Activated CD4-positive, alpha-beta T cell treated with anti-CD3 and anti-CD28 coated beads for 36 hours (primary cell): ENCODE measurements at regions of chr21 and their contacts with region 1.

Region 1: DNA sequence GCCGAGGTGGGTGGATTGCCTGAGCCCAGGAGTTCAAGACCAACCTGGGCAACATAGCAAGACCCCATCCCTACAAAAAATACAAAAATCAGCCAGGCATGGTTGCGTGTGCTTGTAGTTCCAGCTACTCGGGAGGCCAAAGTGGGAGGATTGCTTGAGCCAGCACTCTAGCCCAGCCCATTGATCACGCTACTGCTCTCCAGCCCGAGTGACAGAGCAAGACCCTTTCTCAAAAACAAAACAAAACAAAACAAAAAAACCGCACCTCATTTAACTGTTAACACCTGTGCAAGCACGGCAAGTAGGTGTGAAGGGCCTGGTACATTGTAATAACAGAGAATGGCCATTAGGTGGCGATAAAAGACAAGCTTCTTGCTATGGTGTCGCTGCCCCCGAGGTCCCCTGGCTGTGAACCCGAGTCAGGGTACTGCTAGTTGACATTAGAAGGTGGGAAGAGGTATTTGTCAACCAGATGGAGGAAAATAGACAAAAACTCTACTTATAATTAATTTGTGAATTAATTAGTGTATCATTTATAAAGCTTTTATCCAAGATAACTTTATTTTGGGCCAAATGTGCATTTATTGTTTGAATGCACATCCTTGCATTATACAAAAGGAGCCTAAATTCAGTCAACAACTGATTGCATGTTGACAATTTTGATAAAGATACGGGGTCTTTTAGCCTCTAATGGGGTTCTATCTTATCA is 66.5 kb downstream of the SH3BGR start:
- DNase-seq: peak; percentile 66
- ATAC-seq: peak; percentile 60
- H3K4me3 Mint-ChIP-seq: no peak overlapping the region
- H3K27ac Mint-ChIP-seq: no peak overlapping the region
- H3K4me1 Mint-ChIP-seq: no peaks in the 10 kb centered on the region
- H3K27me3 Mint-ChIP-seq: no peaks in the 10 kb centered on the region

Region 2: GRCh38 chr21:38755681-38756371 is 762.5 kb before region 1 on chr21:
- CTCF ChIA-PET with region 1: no interaction called
- POLR2A ChIA-PET with region 1: no interaction called
- intact Hi-C with region 1: no loop called
- DNase-seq: peak; percentile 29
- ATAC-seq: peak; percentile 74
- H3K4me3 Mint-ChIP-seq: no peak overlapping the region
- H3K27ac Mint-ChIP-seq: no peak overlapping the region
- H3K4me1 Mint-ChIP-seq: peaks cover 6% of the 10 kb centered on the region
- H3K27me3 Mint-ChIP-seq: no peaks in the 10 kb centered on the region

Region 3: DNA sequence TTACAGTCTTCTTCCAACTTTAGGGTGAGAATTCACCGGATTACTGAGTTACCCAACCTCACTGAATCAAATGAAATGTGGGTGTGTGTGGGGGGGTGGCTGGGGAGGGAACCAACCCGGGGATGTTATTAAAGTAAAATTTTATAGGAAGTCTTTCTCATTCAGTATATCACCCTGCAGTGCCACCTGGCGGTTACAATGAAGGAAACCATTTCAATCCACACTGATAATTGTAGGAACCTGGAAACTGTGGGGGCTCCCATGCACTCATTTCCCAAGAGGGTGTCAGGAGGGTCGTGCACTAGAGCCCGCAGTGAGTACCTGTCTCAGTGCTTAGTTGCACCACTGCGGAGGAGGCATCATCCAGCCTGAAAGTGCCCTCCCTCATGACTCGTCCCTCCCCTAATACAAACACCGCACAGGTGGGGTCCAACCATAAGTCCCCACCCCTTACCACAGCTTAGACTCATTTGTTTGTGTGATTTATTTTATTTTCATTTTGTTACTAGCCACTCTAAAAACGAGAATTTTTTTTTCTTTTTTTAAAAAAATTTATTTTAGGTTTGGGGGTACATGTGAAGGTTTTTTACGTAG is 197.6 kb after region 1 on chr21:
- CTCF ChIA-PET with region 1: interaction called, 33 read pairs
- POLR2A ChIA-PET with region 1: no interaction called
- intact Hi-C with region 1: loop called (anchors 1 kb)
- DNase-seq: peak; percentile 66
- ATAC-seq: no peak
- H3K4me3 Mint-ChIP-seq: no peak overlapping the region
- H3K27ac Mint-ChIP-seq: no peak overlapping the region
- H3K4me1 Mint-ChIP-seq: no peaks in the 10 kb centered on the region
- H3K27me3 Mint-ChIP-seq: peaks cover 11% of the 10 kb centered on the region

Region 4: DNA sequence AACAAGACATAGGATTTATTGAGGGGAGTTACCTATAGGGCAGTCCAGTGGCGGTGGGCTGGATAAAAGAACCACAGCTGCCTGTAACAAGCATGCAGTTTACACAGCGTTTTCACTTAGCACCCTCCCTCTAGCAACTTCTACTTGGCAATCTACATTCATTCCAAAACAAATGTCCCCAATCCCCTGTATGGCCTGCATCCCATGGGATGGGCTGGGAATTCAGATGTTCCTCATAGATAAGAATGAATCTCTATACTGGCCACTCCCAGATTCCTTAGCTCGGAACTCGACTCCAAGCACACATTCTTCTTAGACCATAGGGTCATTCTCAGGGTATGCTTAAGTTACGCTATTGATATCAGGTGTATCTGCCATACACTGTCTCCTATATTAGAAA is 382.2 kb after region 1 on chr21:
- CTCF ChIA-PET with region 1: no interaction called
- POLR2A ChIA-PET with region 1: no interaction called
- intact Hi-C with region 1: no loop called
- DNase-seq: no peak
- ATAC-seq: no peak
- H3K4me3 Mint-ChIP-seq: no peak overlapping the region
- H3K27ac Mint-ChIP-seq: no peak overlapping the region
- H3K4me1 Mint-ChIP-seq: no peaks in the 10 kb centered on the region
- H3K27me3 Mint-ChIP-seq: no peaks in the 10 kb centered on the region

Region 5: DNA sequence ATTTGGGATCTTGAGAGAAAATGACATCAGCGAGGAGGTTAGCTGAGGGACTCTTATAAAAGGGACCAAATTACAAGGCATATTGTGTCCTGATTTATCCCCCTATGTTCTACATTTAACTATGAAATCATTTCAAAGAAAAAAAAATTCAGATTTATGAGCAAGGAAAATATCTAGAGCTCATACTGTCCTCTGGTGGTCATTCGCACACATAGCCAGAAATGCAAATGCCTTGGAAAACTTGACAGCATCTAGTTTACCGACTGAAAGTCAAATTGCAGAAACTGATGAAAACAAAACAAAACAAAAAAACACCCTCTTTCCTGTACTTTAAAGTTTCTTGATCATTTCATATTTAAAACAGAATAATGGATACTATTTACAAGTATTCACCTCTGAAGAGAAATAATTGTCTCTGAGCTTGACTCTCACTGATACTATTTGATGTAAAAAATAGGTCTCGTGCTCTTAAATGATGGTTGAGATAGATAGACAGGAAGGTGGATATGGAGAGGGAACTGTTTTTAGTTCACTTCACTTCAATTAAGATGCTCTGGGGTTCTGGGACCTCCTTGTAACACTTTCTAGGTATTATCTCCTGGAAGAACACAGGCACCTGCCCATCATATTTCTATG is 602.8 kb after region 1 on chr21:
- CTCF ChIA-PET with region 1: interaction called, 3 read pairs
- POLR2A ChIA-PET with region 1: no interaction called
- intact Hi-C with region 1: loop called in 1 of 2 experiments (anchors 5 kb)
- DNase-seq: no peak
- ATAC-seq: no peak
- H3K4me3 Mint-ChIP-seq: no peak overlapping the region
- H3K27ac Mint-ChIP-seq: no peak overlapping the region
- H3K4me1 Mint-ChIP-seq: no peaks in the 10 kb centered on the region
- H3K27me3 Mint-ChIP-seq: no peaks in the 10 kb centered on the region